ENCODE measurements at regions of chr19 and their contacts with region 1.

Region 1: GRCh38 chr19:42244347-42245220 is 2.2 kb upstream of the GSK3A start:
- DNase-seq: peak; percentile 88 to 91
- H3K4me3 ChIP-seq: peak overlapping the region; percentile 88
- H3K27ac ChIP-seq: peak overlapping the region; percentile 35
- H3K4me1 ChIP-seq: peaks cover 17% of the 10 kb centered on the region
- H3K27me3 ChIP-seq: no peaks in the 10 kb centered on the region
- CTCF ChIP-seq: peak; percentile 66

Region 2: DNA sequence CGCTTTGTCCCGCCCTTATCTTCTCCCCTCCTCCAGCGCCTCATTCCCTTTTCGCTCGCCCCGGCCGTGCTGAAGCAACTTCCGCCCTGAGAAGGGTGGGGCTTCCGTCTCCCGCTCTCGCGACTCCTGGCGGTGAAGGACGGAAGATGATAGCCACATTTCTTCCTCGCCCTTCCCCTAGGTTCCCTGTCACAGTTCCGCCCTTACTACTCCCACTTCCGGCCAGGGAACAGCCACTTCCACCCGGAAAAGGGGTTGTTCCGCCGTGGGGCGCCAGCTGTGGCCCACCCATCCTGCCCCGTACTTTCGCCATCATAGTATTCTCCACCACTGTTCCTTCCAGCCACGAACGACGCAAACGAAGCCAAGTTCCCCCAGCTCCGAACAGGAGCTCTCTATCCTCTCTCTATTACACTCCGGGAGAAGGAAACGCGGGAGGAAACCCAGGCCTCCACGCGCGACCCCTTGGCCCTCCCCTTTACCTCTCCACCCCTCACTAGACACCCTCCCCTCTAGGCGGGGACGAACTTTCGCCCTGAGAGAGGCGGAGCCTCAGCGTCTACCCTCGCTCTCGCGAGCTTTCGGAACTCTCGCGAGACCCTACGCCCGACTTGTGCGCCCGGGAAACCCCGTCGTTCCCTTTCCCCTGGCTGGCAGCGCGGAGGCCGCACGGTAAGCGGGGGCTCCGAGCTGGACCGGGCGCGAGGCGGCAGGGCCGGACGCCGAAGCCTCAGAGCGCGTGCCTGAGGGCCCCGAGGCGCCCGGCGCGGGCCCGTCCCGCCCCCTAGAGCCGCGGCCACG is 384.8 kb before region 1 on chr19 and contains the start of gene RPS19:
- CTCF ChIA-PET with region 1: no interaction called
- POLR2A ChIA-PET with region 1: no interaction called
- intact Hi-C with region 1: no loop called
- DNase-seq: peak; percentile 93 to 98
- H3K4me3 ChIP-seq: peak within 1 kb of the TSS; percentile 98
- H3K27ac ChIP-seq: peak within 1 kb of the TSS; percentile 96
- H3K4me1 ChIP-seq: peaks cover 41% of the 10 kb centered on the region
- H3K27me3 ChIP-seq: peaks cover 7% of the 10 kb centered on the region
- CTCF ChIP-seq: peak; percentile 63
- total RNA-seq, gene RPS19: 2,593 and 3,356 TPM in 2 replicates

Region 3: GRCh38 chr19:42032431-42032830 is 212.2 kb before region 1 on chr19:
- CTCF ChIA-PET with region 1: interaction called, 16 read pairs
- POLR2A ChIA-PET with region 1: no interaction called
- intact Hi-C with region 1: no loop called
- DNase-seq: peak in 1 of 2 experiments; percentile 39
- H3K4me3 ChIP-seq: no peak overlapping the region
- H3K27ac ChIP-seq: no peak overlapping the region
- H3K4me1 ChIP-seq: no peaks in the 10 kb centered on the region; the same call in 1 of the 2 replicates
- H3K27me3 ChIP-seq: peaks cover 14% of the 10 kb centered on the region; the same call in 1 of the 2 replicates
- CTCF ChIP-seq: no peak

Region 4: GRCh38 chr19:42207767-42208271 is 36.8 kb before region 1 on chr19:
- CTCF ChIA-PET with region 1: interaction called, 4 read pairs
- POLR2A ChIA-PET with region 1: no interaction called
- intact Hi-C with region 1: loop called (anchors 5 kb)
- DNase-seq: peak; percentile 81 to 85
- H3K4me3 ChIP-seq: peak overlapping the region; percentile 31; the same call in 1 of the 2 replicates
- H3K27ac ChIP-seq: peak overlapping the region; percentile 93
- H3K4me1 ChIP-seq: peaks cover 48% of the 10 kb centered on the region
- H3K27me3 ChIP-seq: no peaks in the 10 kb centered on the region
- CTCF ChIP-seq: no peak

Region 5: GRCh38 chr19:42268704-42269477 is 24.3 kb after region 1 on chr19 and contains the start of gene CIC:
- CTCF ChIA-PET with region 1: no interaction called
- POLR2A ChIA-PET with region 1: interaction called, 7 read pairs
- intact Hi-C with region 1: loop called (anchors 1 kb)
- DNase-seq: peak; percentile 99 to 100
- H3K4me3 ChIP-seq: peak within 1 kb of the TSS; percentile 76
- H3K27ac ChIP-seq: peak within 1 kb of the TSS; percentile 70
- H3K4me1 ChIP-seq: peaks cover 20% of the 10 kb centered on the region
- H3K27me3 ChIP-seq: no peaks in the 10 kb centered on the region
- CTCF ChIP-seq: no peak
- total RNA-seq, gene CIC: 58.1 and 60.7 TPM in 2 replicates

Region 6: DNA sequence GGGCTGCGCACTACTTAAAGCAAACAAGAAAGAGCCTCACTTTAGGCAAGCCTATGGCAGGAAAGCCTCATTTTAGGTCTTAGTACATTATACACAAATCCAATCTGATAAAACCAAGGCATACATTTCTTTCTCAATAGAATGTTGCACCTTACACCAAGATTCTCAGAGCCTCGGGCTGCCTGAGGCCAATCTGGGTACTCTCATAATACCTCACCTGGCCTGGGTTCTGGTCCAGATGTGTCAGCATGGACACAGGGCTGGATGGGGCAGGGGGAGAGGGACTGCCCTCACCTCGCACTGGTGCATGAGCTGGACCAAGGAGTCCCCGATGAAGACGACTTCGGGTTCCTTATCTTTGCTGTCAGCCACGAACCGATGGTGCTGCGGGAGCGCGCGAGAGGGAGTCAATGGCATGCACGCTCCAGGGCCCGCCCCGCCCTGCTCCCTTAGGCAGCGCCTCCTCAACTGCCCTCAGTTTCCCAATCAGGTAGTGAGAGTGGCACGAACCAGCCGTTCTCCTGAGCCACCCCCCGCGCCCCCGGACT is 57.1 kb after region 1 on chr19 and contains the start of gene PRR19:
- CTCF ChIA-PET with region 1: interaction called, 3 read pairs
- POLR2A ChIA-PET with region 1: interaction called, 7 read pairs
- intact Hi-C with region 1: loop called (anchors 1 kb)
- DNase-seq: no peak
- H3K4me3 ChIP-seq: peak within 1 kb of the TSS; percentile 78
- H3K27ac ChIP-seq: no peak within 1 kb of the TSS
- H3K4me1 ChIP-seq: peaks cover 7% of the 10 kb centered on the region; the same call in 1 of the 2 replicates
- H3K27me3 ChIP-seq: no peaks in the 10 kb centered on the region
- CTCF ChIP-seq: no peak
- total RNA-seq, gene PRR19: 0.85 and 1.1 TPM in 2 replicates

Region 7: DNA sequence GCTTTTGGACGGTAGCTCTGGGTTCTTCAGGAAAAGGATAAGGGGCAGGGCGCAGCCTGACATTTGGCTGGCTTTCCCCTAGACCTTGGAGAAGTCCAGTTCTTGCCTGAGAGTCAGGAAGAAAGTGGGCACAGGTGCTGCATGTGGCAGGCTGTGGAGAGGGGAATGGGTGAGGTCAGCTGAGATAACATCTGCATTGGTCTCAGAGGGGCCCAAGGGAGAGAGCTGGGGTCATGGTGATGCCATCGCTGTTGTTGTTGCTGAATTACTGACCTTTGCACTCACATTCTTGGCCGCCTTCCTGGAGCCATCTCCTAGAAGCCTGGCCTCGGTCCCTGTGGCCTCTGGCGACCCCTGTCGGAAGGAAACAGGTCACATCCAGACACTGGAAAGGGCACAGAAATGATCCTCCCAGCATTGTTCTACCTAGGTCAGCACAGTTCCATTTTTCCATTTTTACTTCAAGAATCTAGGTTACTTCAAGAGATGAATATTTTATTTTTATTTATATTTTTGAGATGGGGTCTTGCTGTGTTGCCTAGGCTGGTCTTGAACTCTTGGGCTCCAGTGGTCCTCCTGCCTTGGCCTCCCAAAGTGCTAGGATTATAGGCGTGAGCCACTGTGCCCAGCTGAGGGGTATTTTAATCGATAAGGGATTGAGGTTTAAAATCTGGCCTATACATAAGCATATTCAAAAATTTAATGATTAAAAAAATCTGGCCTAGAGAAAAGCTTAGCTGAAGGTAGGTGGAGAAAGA is 189.1 kb after region 1 on chr19:
- CTCF ChIA-PET with region 1: no interaction called
- POLR2A ChIA-PET with region 1: no interaction called
- intact Hi-C with region 1: loop called (anchors 5 kb)
- DNase-seq: peak; percentile 55 to 76
- H3K4me3 ChIP-seq: no peak overlapping the region
- H3K27ac ChIP-seq: peak overlapping the region; percentile 45
- H3K4me1 ChIP-seq: peaks cover 9% of the 10 kb centered on the region
- H3K27me3 ChIP-seq: no peaks in the 10 kb centered on the region
- CTCF ChIP-seq: peak; percentile 78

Measured in PC-9 (cell line).